MCF 10A (cell line): ENCODE measurements at regions of chr5 and their contacts with region 1.

Region 1: DNA sequence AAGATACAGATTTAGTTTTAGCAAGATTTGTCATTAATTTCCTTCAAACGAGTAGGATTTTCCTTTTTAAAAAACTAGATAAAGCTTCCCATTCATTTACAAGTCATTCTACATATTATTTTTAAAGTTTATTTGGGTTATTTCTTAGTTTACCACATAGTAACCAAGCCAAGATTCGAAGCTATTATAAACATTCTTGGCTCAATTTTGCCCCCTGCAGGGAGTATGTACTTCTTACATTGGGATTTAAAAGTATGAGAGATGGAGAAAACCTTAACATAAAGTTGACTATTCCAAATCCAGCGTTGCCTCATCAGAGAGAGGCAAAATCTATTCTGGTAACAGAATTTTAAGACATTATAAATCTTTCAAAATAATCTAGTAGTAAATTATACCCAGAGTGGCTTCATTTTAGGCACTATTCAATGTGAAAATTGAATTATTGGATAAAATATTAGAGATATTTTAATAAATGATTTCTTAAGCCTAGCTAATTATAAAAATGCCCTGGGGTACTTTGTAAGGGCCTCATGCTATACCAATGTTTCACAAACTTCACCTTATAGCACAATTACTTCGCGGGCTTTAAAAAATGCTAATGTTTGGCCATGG is 39.1 kb downstream of the FBN2 start:
- DNase-seq: peak; percentile 77
- H3K4me3 Mint-ChIP-seq: no peak overlapping the region
- H3K27ac Mint-ChIP-seq: no peak overlapping the region
- H3K4me1 Mint-ChIP-seq: peaks cover 8% of the 10 kb centered on the region
- H3K27me3 Mint-ChIP-seq: no peaks in the 10 kb centered on the region
- CTCF ChIP-seq: peak; percentile 46

Region 2: GRCh38 chr5:127564002-127564769 is 934.8 kb before region 1 on chr5:
- CTCF ChIA-PET with region 1: interaction called, 3 read pairs
- POLR2A ChIA-PET with region 1: no interaction called
- intact Hi-C with region 1: loop called (anchors 5 kb)
- DNase-seq: peak; percentile 89
- H3K4me3 Mint-ChIP-seq: no peak overlapping the region
- H3K27ac Mint-ChIP-seq: no peak overlapping the region
- H3K4me1 Mint-ChIP-seq: peaks cover 5% of the 10 kb centered on the region
- H3K27me3 Mint-ChIP-seq: peaks cover 10% of the 10 kb centered on the region
- CTCF ChIP-seq: peak; percentile 77

Region 3: GRCh38 chr5:128201065-128201926 is 297.7 kb before region 1 on chr5:
- CTCF ChIA-PET with region 1: interaction called, 11 read pairs
- POLR2A ChIA-PET with region 1: no interaction called
- intact Hi-C with region 1: no loop called
- DNase-seq: peak; percentile 81
- H3K4me3 Mint-ChIP-seq: peak overlapping the region; percentile 42
- H3K27ac Mint-ChIP-seq: no peak overlapping the region
- H3K4me1 Mint-ChIP-seq: peaks cover 21% of the 10 kb centered on the region
- H3K27me3 Mint-ChIP-seq: no peaks in the 10 kb centered on the region
- CTCF ChIP-seq: peak; percentile 95

Region 4: DNA sequence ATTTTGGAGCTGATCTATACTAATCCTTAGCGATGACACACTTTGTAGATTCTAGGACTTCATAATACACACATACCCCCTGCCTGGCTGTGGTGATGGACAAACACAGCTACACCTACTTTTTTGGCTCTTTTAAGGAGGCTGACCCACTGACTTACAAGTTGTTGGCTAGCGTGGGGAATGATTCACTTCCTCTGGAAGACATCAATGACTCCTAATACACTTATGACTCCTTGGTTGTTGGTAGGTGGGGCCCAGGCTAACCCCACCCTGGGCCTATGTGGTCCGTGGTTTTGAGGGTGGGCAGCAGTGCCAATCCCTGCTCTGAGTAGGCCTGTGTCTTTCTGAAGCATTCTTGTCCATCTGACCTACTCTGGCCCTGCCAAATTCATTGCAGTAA is 270.9 kb before region 1 on chr5:
- CTCF ChIA-PET with region 1: interaction called, 12 read pairs
- POLR2A ChIA-PET with region 1: no interaction called
- intact Hi-C with region 1: no loop called
- DNase-seq: peak; percentile 94
- H3K4me3 Mint-ChIP-seq: no peak overlapping the region
- H3K27ac Mint-ChIP-seq: peak overlapping the region; percentile 65
- H3K4me1 Mint-ChIP-seq: peaks cover 23% of the 10 kb centered on the region
- H3K27me3 Mint-ChIP-seq: no peaks in the 10 kb centered on the region
- CTCF ChIP-seq: no peak

Region 5: DNA sequence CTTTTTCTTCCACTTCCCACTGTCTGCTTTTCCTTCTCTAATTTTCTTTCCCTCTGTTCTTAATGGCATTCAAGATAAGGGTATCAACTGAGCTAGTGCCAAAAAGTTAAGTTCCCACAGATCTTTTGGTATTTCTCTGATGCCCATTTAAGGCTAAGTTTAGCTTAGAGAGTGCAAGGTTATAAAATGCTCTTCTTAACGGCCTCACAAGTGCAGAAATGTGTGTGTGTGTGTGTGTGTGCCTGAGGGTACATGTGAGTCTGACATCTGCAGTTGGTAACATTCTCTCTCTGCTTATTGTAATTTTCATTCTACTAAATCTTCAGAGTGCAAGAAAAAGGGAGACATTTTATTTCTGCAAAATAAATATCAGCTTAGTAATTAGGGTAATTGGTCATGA is 14.9 kb after region 1 on chr5:
- CTCF ChIA-PET with region 1: interaction called, 10 read pairs
- POLR2A ChIA-PET with region 1: no interaction called
- intact Hi-C with region 1: no loop called
- DNase-seq: no peak
- H3K4me3 Mint-ChIP-seq: no peak overlapping the region
- H3K27ac Mint-ChIP-seq: no peak overlapping the region
- H3K4me1 Mint-ChIP-seq: peaks cover 5% of the 10 kb centered on the region
- H3K27me3 Mint-ChIP-seq: no peaks in the 10 kb centered on the region
- CTCF ChIP-seq: no peak

Region 6: GRCh38 chr5:128844354-128844923 is 345.5 kb after region 1 on chr5:
- CTCF ChIA-PET with region 1: interaction called, 10 read pairs
- POLR2A ChIA-PET with region 1: no interaction called
- intact Hi-C with region 1: loop called (anchors 2 kb)
- DNase-seq: peak; percentile 46
- H3K4me3 Mint-ChIP-seq: no peak overlapping the region
- H3K27ac Mint-ChIP-seq: no peak overlapping the region
- H3K4me1 Mint-ChIP-seq: no peaks in the 10 kb centered on the region
- H3K27me3 Mint-ChIP-seq: no peaks in the 10 kb centered on the region
- CTCF ChIP-seq: peak; percentile 59